ENCODE measurements at regions of chr11 and their contacts with region 1.

Region 1: DNA sequence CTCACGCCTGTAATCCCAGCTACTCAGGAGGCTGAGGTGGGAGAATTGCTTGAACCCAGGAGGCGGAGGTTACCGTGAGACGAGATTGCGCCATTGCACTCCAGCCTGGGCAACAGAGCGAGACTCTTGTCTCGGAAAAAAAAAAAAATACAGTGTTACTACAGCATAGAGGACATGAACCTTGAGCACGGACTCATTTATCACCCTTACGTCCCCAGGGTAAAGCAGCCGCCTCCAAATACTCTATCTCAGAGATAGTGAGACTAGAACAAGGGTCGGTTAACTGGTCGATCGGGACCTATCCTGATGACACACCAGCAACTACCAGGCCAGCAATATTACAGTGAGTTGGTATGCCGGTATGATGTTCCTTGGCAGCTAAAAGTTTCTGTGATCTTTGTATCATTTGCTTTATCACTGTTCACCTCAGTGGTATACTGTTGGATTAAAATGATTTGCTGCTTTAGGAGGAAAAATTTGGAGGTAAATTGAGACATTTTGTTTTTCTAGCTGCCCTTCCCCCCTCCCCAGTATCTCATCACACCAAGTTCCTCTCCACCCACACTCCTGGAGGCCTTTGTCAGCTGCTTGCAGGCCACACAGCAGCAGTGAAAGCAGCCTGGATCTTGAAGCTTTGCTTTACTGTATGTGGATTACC is 7.0 kb upstream of the SIDT2 start:
- DNase-seq: peak; percentile 57 to 82 (median 65)
- ATAC-seq: peak; percentile 81
- H3K4me3 ChIP-seq: no peak overlapping the region
- H3K27ac ChIP-seq: peak overlapping the region; percentile 69; the same call in 2 of the 3 replicates
- H3K4me1 ChIP-seq: peaks cover 26 to 34% of the 10 kb centered on the region in 2 experiments
- H3K27me3 ChIP-seq: no peaks in the 10 kb centered on the region
- CTCF ChIP-seq: no peak
- EP300 ChIP-seq: peak; percentile 67; the same call in 1 of the 2 replicates
- POLR2A ChIP-seq: peak; percentile 65; the same call in 1 of the 2 replicates
- RAD21 ChIP-seq: no peak

Region 2: GRCh38 chr11:117010808-117011540 is 160.6 kb before region 1 on chr11:
- CTCF ChIA-PET with region 1: no interaction called
- POLR2A ChIA-PET with region 1: no interaction called
- in situ Hi-C with region 1: no loop called
- intact Hi-C with region 1: no loop called
- DNase-seq: no peak
- ATAC-seq: peak; percentile 41
- H3K4me3 ChIP-seq: no peak overlapping the region
- H3K27ac ChIP-seq: no peak overlapping the region
- H3K4me1 ChIP-seq: peaks cover 0 to 3% of the 10 kb centered on the region in 2 experiments; a peak in 1 of 5 replicates
- H3K27me3 ChIP-seq: no peaks in the 10 kb centered on the region
- CTCF ChIP-seq: no peak
- EP300 ChIP-seq: no peak
- POLR2A ChIP-seq: no peak
- RAD21 ChIP-seq: no peak

Region 3: DNA sequence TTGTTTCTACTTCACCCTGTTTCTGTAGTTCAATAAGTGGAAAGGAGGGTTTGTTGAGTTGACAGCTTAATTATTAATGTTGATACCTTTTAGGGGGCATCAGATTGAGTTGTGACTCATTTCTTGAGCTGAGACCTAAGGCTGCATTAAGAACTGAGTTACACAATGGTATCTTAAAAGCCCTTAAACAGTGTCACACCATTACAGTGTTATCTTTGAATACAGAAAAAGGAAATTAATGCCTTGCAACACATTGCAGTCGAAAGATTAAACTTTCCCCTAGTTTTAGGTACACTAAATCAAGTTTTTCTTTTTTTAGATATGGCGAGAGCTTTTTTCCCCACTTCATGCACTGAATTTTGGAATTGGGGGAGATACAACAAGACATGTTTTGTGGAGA is 10.7 kb before region 1 on chr11:
- CTCF ChIA-PET with region 1: no interaction called
- POLR2A ChIA-PET with region 1: interaction called, 27 read pairs
- in situ Hi-C with region 1: no loop called
- intact Hi-C with region 1: no loop called
- DNase-seq: peak in 3 of 4 experiments; percentile 17 to 60 (median 32)
- ATAC-seq: peak; percentile 66
- H3K4me3 ChIP-seq: no peak overlapping the region
- H3K27ac ChIP-seq: peak overlapping the region; percentile 41; the same call in 1 of the 3 replicates
- H3K4me1 ChIP-seq: peaks cover 6 to 7% of the 10 kb centered on the region in 2 experiments; a peak in 4 of 5 replicates
- H3K27me3 ChIP-seq: no peaks in the 10 kb centered on the region
- CTCF ChIP-seq: no peak
- EP300 ChIP-seq: peak; percentile 53; the same call in 1 of the 2 replicates
- POLR2A ChIP-seq: no peak
- RAD21 ChIP-seq: no peak